Left cardiac atrium (tissue), 4 donors: ENCODE measurements at regions of chr19 and their contacts with region 1.

Region 1: GRCh38 chr19:49766007-49766937 is 529 bp upstream of the AP2A1 start:
- DNase-seq: peak; percentile 99
- ATAC-seq: peak; percentile 91 to 95

Region 2: DNA sequence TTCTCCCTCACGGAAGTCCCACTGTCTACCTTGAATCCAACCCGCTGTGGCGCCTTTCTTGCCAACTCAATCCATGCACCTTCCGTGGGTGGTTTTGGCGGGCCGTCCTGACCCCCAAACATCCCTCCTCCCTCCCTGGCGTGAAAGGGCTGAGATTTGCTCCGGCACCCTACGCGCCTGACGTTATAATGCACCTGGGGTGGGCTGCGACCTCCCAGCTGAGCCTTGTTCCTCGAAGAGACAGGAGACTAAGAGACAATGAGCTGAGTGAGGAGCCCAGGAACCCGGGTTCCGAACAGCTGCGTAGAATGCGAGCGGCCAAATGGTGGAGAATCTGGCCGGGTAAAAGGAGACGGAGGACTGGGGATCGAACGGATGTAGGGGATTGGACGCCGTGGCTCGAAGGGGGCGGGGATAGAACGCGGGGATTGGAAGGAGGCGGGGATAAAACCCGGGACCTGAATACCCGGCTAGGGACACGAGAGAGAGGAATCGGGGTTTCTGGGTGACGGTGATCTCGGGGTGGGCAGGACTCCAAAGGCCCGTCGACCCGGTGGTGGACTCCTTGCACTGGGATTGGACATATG is 75.5 kb before region 1 on chr19 and contains the start of gene CPT1C:
- intact Hi-C with region 1: loop called in 1 of 2 experiments (anchors 5 kb)
- DNase-seq: peak; percentile 87
- ATAC-seq: peak; percentile 85 to 86
- total RNA-seq, gene CPT1C: 4.7 to 5.1 TPM

Region 3: DNA sequence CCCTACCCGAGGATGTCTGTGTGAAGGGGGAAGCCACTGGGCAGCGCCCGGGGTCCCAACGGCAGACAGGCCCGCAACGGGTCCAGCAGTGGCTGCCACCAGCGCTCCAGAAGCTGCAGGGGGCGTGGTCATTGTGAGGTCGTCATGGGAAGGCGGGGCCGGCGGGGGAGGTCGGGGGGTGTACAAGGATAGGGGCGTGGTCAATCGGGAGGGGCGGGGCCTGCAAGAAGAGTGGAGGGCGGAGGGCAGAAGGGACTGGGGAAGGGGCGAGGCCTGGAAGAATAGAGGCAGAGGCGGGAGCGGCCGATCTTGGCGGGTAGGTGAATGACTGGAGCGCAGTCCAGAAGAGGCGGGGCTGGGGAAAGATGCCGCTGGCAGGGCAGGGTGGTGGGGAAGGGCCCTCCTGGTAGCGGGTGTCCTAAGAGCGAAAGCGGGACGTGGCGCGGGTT is 42.5 kb after region 1 on chr19:
- intact Hi-C with region 1: loop called in 1 of 2 experiments (anchors 5 kb)
- DNase-seq: peak; percentile 96
- ATAC-seq: peak; percentile 73 to 79

Region 4: DNA sequence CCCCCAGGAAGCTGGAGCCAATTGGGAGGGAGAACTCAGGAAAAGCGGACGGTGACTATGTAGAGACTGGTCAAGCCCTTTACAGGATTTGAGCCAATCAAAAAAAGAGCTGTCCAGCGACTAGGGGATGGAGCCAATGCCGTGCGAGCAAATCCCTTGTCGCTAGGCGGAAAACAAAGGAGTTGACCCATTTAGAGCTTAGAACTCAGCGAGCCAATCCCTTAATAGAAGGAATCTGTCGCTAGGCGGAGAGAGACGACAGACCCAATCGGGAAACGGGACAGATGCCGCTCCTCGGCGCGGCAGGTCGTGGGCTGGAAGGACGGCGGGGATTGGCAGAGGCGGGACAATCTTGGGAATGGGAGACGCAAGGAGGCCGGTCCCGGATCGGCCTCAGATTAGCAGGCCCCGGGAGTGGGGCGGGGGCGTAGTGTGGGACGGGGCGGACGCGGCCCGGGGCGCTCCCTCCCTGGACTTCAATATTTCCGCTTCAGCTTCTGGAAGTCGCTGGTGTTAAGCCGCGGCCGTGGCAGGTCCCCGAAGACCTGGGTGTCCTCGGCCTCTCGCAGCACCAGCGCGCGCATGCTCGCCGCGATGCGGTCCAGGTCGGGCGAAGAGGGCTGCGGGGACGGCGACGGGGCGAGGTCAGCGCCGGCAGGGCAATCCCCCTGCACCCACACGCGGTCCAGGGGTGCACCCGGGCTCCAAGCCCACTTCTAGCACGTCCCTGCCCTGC is 103.3 kb after region 1 on chr19:
- intact Hi-C with region 1: loop called in 1 of 2 experiments (anchors 5 kb)
- DNase-seq: peak; percentile 96
- ATAC-seq: peak; percentile 84 to 87